ENCODE measurements at regions of chr4 and their contacts with region 1.

Region 1: DNA sequence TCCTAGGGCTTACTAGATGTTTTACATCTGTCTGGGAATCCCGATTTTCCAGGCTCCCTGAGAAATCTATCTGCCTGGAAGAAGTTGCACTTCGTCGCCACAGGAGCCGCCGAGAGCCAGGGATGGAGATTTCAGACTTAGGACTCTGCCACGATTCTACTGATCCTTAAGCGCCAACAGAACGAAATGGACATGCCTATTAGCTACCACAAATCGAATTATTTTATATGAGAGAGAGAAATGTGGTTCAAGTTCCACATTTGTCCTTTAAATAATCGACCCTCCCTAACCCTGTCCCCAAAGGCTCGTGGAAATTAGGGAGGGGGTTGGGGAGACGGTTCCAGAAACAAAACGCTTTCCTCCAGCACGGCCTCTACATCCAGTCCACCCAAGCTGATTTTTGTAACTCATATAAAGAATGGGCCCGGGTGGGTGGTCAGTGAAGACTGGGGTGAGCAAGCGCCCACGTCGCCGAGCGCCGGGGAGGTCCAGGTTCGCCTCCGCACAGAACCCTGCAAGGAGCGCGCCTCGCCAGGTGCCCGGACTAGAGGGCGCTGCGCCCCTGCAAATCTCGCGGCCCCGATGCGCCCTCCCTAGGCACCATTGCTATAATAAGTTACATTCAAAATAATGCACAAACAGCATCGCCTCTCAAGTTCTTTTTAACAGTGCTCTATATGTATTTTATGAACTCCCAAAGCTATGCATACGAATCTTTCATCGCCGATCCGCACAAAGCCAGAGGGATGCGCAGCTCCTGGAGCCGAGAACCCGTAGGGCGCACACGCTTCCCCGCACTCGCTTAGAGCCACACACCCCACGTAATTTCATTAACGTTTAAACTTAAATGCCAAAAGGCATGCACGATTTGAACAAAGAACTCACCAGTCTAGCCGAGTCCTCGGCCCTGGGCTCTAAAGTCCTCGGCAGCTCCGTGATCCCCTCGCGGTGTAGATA is 2.1 kb upstream of the FAT1 start:
- DNase-seq: peak; percentile 52 to 82 (median 69)
- ATAC-seq: peak; percentile 80
- H3K4me3 ChIP-seq: peak overlapping the region; percentile 58
- H3K27ac ChIP-seq: no peak overlapping the region
- H3K4me1 ChIP-seq: peaks cover 15 to 39% of the 10 kb centered on the region in 2 experiments; a peak in 4 of 5 replicates
- H3K27me3 ChIP-seq: peaks cover 11 to 34% of the 10 kb centered on the region in 2 experiments; a peak in 4 of 5 replicates
- CTCF ChIP-seq: peak; percentile 71 to 97 (median 90)
- EP300 ChIP-seq: no peak
- POLR2A ChIP-seq: no peak
- RAD21 ChIP-seq: peak; percentile 79 to 86

Region 2: DNA sequence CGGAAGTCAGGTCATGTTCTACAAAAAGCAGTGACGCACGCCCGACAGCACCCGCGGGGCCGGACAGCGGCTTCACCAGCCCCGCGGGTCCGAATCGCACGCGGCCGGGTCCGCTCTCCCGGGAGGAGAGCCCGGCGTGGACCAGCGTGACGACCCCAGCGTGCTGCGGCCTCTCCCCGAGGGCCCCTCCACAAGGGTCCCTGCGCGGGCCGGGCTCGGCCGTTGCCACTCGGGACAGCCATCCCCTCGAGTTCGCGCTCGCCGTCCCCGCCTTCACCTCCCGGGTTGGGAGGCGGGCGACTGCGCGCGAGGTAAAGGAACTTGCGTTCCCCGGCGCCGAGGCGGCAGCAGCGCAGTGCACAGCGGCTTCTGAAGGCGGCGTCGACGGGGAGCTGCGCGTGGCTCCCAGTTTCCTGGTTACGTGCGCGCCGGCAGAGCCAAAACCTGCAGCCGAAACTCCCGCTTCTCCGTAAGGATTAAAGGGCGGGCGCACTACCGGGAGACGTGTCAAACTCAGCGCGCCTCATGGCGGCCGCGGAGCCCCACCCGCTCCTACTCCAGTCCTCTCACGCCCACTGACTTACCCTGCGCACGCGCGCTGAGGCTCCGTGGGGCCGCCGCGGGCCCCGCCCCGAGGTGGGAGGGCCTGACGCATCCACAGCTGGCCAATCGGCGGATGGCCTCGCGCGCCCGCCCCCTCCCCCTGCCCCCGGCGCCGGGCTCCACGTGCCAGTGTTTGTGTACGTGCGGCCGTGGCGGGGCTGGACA is 1329.6 kb before region 1 on chr4:
- CTCF ChIA-PET with region 1: no interaction called
- POLR2A ChIA-PET with region 1: no interaction called
- in situ Hi-C with region 1: no loop called
- intact Hi-C with region 1: no loop called
- DNase-seq: peak; percentile 98 to 99 (median 99)
- ATAC-seq: peak; percentile 95
- H3K4me3 ChIP-seq: peak overlapping the region; percentile 56
- H3K27ac ChIP-seq: peak overlapping the region; percentile 94
- H3K4me1 ChIP-seq: peaks cover 2 to 20% of the 10 kb centered on the region in 2 experiments; a peak in 4 of 5 replicates
- H3K27me3 ChIP-seq: no peaks in the 10 kb centered on the region
- CTCF ChIP-seq: no peak
- EP300 ChIP-seq: no peak
- POLR2A ChIP-seq: peak; percentile 87
- RAD21 ChIP-seq: no peak

Region 3: GRCh38 chr4:186669159-186669731 is 56.5 kb before region 1 on chr4:
- CTCF ChIA-PET with region 1: no interaction called
- POLR2A ChIA-PET with region 1: no interaction called
- in situ Hi-C with region 1: no loop called
- intact Hi-C with region 1: loop called (anchors 2 kb)
- DNase-seq: peak in 1 of 4 experiments; percentile 21
- ATAC-seq: peak; percentile 58; the same call in 1 of the 3 replicates
- H3K4me3 ChIP-seq: no peak overlapping the region
- H3K27ac ChIP-seq: no peak overlapping the region
- H3K4me1 ChIP-seq: peaks cover 0 to 3% of the 10 kb centered on the region in 2 experiments; a peak in 1 of 5 replicates
- H3K27me3 ChIP-seq: peaks cover 0 to 10% of the 10 kb centered on the region in 2 experiments; a peak in 2 of 5 replicates
- CTCF ChIP-seq: peak in 2 of 3 experiments; percentile 12 to 59; a peak in 4 of 6 replicates
- EP300 ChIP-seq: no peak
- POLR2A ChIP-seq: no peak
- RAD21 ChIP-seq: peak; percentile 27 to 55; a peak in 3 of 4 replicates

Region 4: GRCh38 chr4:186852964-186853391 is 127.2 kb after region 1 on chr4:
- CTCF ChIA-PET with region 1: no interaction called
- POLR2A ChIA-PET with region 1: no interaction called
- in situ Hi-C with region 1: no loop called
- intact Hi-C with region 1: no loop called
- DNase-seq: no peak
- ATAC-seq: no peak
- H3K4me3 ChIP-seq: no peak overlapping the region
- H3K27ac ChIP-seq: peak overlapping the region; percentile 12; the same call in 1 of the 3 replicates
- H3K4me1 ChIP-seq: no peaks in the 10 kb centered on the region; a peak in 1 of 5 replicates
- H3K27me3 ChIP-seq: no peaks in the 10 kb centered on the region
- CTCF ChIP-seq: no peak
- EP300 ChIP-seq: no peak
- POLR2A ChIP-seq: no peak
- RAD21 ChIP-seq: no peak

Region 5: GRCh38 chr4:186887291-186887700 is 161.5 kb after region 1 on chr4:
- CTCF ChIA-PET with region 1: no interaction called
- POLR2A ChIA-PET with region 1: no interaction called
- in situ Hi-C with region 1: no loop called
- intact Hi-C with region 1: loop called (anchors 5 kb)
- DNase-seq: peak in 1 of 4 experiments; percentile 20
- ATAC-seq: peak; percentile 18; the same call in 1 of the 3 replicates
- H3K4me3 ChIP-seq: peak overlapping the region; percentile 64
- H3K27ac ChIP-seq: no peak overlapping the region
- H3K4me1 ChIP-seq: peaks cover 8 to 16% of the 10 kb centered on the region in 2 experiments; a peak in 3 of 5 replicates
- H3K27me3 ChIP-seq: no peaks in the 10 kb centered on the region
- CTCF ChIP-seq: no peak
- EP300 ChIP-seq: no peak
- POLR2A ChIP-seq: no peak
- RAD21 ChIP-seq: no peak

Region 6: GRCh38 chr4:187065396-187065795 is 339.6 kb after region 1 on chr4:
- CTCF ChIA-PET with region 1: no interaction called
- POLR2A ChIA-PET with region 1: no interaction called
- in situ Hi-C with region 1: no loop called
- intact Hi-C with region 1: loop called (anchors 10 kb)
- DNase-seq: no peak
- ATAC-seq: no peak
- H3K4me3 ChIP-seq: no peak overlapping the region
- H3K27ac ChIP-seq: no peak overlapping the region
- H3K4me1 ChIP-seq: no peaks in the 10 kb centered on the region
- H3K27me3 ChIP-seq: peaks cover 13 to 34% of the 10 kb centered on the region in 2 experiments; a peak in 4 of 5 replicates
- CTCF ChIP-seq: no peak
- EP300 ChIP-seq: no peak
- POLR2A ChIP-seq: no peak
- RAD21 ChIP-seq: no peak

Region 7: DNA sequence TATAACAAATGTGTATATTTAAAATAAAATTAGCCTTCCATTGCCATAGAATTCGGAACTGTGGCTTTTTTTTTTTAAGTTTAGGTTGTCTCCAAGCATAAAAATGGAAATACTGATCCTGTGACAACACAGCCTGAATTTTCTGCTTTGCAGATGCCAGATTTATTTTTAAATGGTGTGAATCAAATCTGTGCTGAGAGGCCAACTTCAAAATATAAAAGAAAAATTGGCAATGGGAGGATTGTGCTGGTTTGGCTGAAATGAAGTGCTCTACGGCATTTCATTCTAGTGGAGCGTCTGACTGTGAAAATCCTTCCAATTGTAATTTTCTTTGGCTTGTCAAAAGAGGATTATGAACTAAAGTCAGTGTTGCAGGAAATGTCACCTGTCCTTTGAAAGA is 689.5 kb after region 1 on chr4:
- CTCF ChIA-PET with region 1: no interaction called
- POLR2A ChIA-PET with region 1: no interaction called
- in situ Hi-C with region 1: no loop called
- intact Hi-C with region 1: loop called (anchors 10 kb)
- DNase-seq: no peak
- ATAC-seq: no peak
- H3K4me3 ChIP-seq: no peak overlapping the region
- H3K27ac ChIP-seq: no peak overlapping the region
- H3K4me1 ChIP-seq: no peaks in the 10 kb centered on the region
- H3K27me3 ChIP-seq: no peaks in the 10 kb centered on the region
- CTCF ChIP-seq: no peak
- EP300 ChIP-seq: no peak
- POLR2A ChIP-seq: no peak
- RAD21 ChIP-seq: no peak

Region 8: DNA sequence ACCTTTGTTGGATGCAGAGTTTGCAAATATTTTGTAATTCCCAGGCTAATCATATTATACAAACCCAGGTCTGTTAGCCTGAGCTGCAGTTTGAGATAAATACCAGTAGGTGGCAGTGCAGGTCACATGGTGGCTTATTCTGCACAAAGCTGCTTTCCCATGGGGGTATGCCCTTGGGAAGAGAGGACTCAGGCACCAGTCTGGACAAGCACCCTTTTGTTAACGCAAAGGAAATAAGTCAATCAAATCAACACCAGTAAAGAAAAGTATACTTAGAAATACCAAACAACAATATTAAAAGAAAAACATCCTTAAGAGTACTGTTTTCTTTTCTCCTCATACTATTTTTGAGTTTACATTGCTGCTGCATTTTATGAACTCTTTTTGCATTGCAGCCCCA is 880.8 kb after region 1 on chr4:
- CTCF ChIA-PET with region 1: no interaction called
- POLR2A ChIA-PET with region 1: no interaction called
- in situ Hi-C with region 1: no loop called
- intact Hi-C with region 1: loop called (anchors 10 kb)
- DNase-seq: peak; percentile 37 to 67 (median 53)
- ATAC-seq: peak; percentile 73; the same call in 2 of the 3 replicates
- H3K4me3 ChIP-seq: no peak overlapping the region
- H3K27ac ChIP-seq: no peak overlapping the region
- H3K4me1 ChIP-seq: no peaks in the 10 kb centered on the region
- H3K27me3 ChIP-seq: no peaks in the 10 kb centered on the region
- CTCF ChIP-seq: peak; percentile 50 to 72 (median 69)
- EP300 ChIP-seq: no peak
- POLR2A ChIP-seq: no peak
- RAD21 ChIP-seq: peak; percentile 72 to 73

Measured in K562 (cell line).